CD8-positive, alpha-beta T cell (primary cell): ENCODE measurements at regions of chr17 and their contacts with region 1.

Region 1: GRCh38 chr17:3770466-3770865 is 30.5 kb downstream of the ITGAE start:
- DNase-seq: peak; percentile 30 to 88 (median 73)
- ATAC-seq: peak; percentile 73
- H3K4me3 ChIP-seq: no peak overlapping the region
- H3K4me3 Mint-ChIP-seq: peak overlapping the region; percentile 68
- H3K27ac ChIP-seq: peak overlapping the region; percentile 57 to 61
- H3K27ac Mint-ChIP-seq: peak overlapping the region; percentile 95
- H3K4me1 ChIP-seq: peaks cover 66% of the 10 kb centered on the region
- H3K4me1 Mint-ChIP-seq: peaks cover 64% of the 10 kb centered on the region
- H3K27me3 ChIP-seq: no peaks in the 10 kb centered on the region
- H3K27me3 Mint-ChIP-seq: no peaks in the 10 kb centered on the region
- CTCF ChIP-seq: no peak

Region 2: DNA sequence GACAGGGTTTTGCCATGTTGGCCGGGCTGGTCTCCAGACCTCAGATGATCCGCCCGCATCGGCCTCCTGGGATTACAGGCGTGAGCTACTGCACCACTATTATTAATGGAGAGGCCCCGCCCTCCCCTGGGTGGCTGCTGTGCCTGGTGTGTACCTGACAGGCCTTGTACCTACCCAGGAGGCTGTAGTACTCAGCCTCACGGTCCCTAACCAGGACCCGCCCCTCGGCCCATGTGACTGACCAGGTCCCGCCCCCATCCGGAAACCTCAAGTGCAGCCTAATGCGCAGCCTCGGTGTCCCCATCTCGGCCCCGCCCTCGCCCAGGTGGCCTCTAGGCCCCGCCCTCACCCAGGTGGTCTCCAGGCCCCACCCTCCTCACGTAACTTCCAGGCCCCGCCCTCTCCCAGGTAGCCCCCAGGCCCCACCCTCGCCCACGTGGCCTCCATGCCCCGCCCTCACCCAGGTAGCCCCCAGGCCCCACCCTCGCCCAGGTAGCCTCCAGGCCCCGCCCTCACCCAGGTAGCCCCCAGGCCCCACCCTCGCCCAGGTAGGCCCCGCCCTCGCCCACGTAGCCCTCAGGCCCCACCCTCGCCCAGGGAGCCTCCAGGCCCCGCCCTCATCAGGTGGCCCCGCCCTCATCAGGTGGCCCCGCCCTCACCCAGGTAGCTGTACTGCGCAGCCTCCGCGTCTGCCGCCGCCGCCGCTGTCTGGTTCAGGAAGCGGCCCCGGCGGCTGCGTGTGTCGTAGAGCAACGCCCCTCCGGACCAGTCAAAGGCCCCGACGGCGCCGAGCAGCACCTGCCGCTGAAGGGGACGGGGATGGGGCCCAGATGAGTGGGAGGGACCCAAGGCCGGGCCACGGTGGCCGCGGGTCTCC is 15.8 kb before region 1 on chr17:
- CTCF ChIA-PET with region 1: interaction called, 3 read pairs
- POLR2A ChIA-PET with region 1: interaction called, 4 read pairs
- intact Hi-C with region 1: loop called in 1 of 2 experiments (anchors 1 kb)
- DNase-seq: peak; percentile 69 to 89 (median 82)
- ATAC-seq: peak; percentile 96
- H3K4me3 ChIP-seq: peak overlapping the region; percentile 23 to 53
- H3K4me3 Mint-ChIP-seq: peak overlapping the region; percentile 56
- H3K27ac ChIP-seq: peak overlapping the region; percentile 45 to 73
- H3K27ac Mint-ChIP-seq: peak overlapping the region; percentile 90
- H3K4me1 ChIP-seq: peaks cover 36% of the 10 kb centered on the region
- H3K4me1 Mint-ChIP-seq: peaks cover 39% of the 10 kb centered on the region
- H3K27me3 ChIP-seq: no peaks in the 10 kb centered on the region
- H3K27me3 Mint-ChIP-seq: no peaks in the 10 kb centered on the region
- CTCF ChIP-seq: no peak

Region 3: GRCh38 chr17:3788200-3788599 is 17.7 kb after region 1 on chr17:
- CTCF ChIA-PET with region 1: interaction called, 4 read pairs
- POLR2A ChIA-PET with region 1: interaction called, 4 read pairs
- intact Hi-C with region 1: loop called in 1 of 2 experiments (anchors 2 kb)
- DNase-seq: peak in 4 of 9 experiments; percentile 49 to 82 (median 70)
- ATAC-seq: peak; percentile 49
- H3K4me3 ChIP-seq: peak overlapping the region in 1 of 2 experiments; percentile 26
- H3K4me3 Mint-ChIP-seq: no peak overlapping the region
- H3K27ac ChIP-seq: peak overlapping the region; percentile 3 to 22
- H3K27ac Mint-ChIP-seq: peak overlapping the region; percentile 60
- H3K4me1 ChIP-seq: peaks cover 13% of the 10 kb centered on the region
- H3K4me1 Mint-ChIP-seq: peaks cover 39% of the 10 kb centered on the region
- H3K27me3 ChIP-seq: no peaks in the 10 kb centered on the region
- H3K27me3 Mint-ChIP-seq: no peaks in the 10 kb centered on the region
- CTCF ChIP-seq: no peak